Endothelial cell of umbilical vein (primary cell): ENCODE measurements at regions of chr19 and their contacts with region 1.

Region 1: DNA sequence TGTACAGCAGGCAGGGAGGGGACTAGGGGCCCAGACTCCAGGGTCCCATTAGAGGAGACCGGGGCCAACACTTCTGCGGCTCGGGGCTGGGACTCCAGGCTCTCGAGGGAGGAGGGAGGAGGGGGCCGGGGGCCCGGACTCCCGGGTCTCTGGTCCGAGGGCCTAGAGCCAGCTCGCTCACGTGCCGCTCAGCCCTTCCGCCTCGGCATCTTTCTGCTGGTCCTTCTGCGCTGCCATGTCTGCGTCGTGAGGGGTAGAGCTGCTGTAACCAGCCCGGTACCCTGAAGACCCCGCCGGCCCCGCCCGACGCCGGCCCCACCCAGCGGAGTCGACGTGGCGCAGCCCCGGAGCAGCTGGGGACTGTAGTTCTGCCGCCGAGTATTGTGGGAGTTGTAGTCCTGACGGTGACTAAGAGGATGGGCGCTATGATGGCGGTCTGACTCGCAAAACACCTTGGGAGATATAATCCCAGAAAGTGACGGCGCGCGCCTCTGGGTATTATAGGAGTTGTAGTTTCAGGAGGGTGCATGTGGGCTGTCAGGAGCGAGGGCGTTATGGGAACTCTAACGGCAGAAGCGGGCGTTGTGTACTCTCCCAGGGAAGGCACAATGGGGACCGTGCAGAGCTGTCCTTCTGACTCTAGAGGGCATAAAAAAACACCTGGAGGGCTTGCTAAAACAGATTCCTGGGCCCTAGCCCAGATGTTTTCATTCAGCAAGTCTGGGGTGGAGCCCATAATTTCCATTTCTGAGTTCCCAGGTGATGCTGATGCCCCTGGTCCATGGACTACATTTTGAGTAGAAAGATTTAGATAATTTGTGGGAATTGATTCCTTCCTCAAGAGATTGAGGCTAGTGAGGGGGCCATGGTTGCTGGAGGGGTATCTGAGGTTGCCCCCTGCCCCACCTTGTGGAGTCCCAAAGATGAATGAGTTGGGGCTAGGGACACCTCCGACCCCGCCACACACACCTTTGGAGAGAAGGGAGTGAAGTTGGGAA is at the start of gene RABAC1:
- DNase-seq: peak; percentile 91
- H3K4me3 ChIP-seq: peak within 1 kb of the TSS; percentile 52 to 90 (median 68)
- H3K27ac ChIP-seq: peak within 1 kb of the TSS; percentile 87
- H3K4me1 ChIP-seq: peaks cover 12% of the 10 kb centered on the region
- H3K27me3 ChIP-seq: no peaks in the 10 kb centered on the region
- CTCF ChIP-seq: peak in 1 of 2 donors; percentile 33
- POLR2A ChIP-seq: no peak
- total RNA-seq, gene RABAC1: 178 and 181 TPM in 2 replicates

Region 2: DNA sequence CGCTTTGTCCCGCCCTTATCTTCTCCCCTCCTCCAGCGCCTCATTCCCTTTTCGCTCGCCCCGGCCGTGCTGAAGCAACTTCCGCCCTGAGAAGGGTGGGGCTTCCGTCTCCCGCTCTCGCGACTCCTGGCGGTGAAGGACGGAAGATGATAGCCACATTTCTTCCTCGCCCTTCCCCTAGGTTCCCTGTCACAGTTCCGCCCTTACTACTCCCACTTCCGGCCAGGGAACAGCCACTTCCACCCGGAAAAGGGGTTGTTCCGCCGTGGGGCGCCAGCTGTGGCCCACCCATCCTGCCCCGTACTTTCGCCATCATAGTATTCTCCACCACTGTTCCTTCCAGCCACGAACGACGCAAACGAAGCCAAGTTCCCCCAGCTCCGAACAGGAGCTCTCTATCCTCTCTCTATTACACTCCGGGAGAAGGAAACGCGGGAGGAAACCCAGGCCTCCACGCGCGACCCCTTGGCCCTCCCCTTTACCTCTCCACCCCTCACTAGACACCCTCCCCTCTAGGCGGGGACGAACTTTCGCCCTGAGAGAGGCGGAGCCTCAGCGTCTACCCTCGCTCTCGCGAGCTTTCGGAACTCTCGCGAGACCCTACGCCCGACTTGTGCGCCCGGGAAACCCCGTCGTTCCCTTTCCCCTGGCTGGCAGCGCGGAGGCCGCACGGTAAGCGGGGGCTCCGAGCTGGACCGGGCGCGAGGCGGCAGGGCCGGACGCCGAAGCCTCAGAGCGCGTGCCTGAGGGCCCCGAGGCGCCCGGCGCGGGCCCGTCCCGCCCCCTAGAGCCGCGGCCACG is 99.5 kb before region 1 on chr19 and contains the start of gene RPS19:
- CTCF ChIA-PET with region 1: interaction called, 7 read pairs
- POLR2A ChIA-PET with region 1: interaction called, 4 read pairs
- dilution Hi-C with region 1: no loop called
- intact Hi-C with region 1: loop called (anchors 1 kb)
- DNase-seq: peak; percentile 99
- H3K4me3 ChIP-seq: peak within 1 kb of the TSS; percentile 78 to 86 (median 85)
- H3K27ac ChIP-seq: peak within 1 kb of the TSS; percentile 93
- H3K4me1 ChIP-seq: peaks cover 39% of the 10 kb centered on the region
- H3K27me3 ChIP-seq: no peaks in the 10 kb centered on the region
- CTCF ChIP-seq: peak; percentile 43 to 65
- POLR2A ChIP-seq: peak; percentile 86
- total RNA-seq, gene RPS19: 2,195 and 2,234 TPM in 2 replicates

Region 3: GRCh38 chr19:41872775-41873647 is 86.3 kb before region 1 on chr19:
- CTCF ChIA-PET with region 1: interaction called, 15 read pairs
- POLR2A ChIA-PET with region 1: interaction called, 4 read pairs
- dilution Hi-C with region 1: no loop called
- intact Hi-C with region 1: loop called (anchors 2 kb)
- DNase-seq: peak; percentile 65
- H3K4me3 ChIP-seq: no peak overlapping the region
- H3K27ac ChIP-seq: no peak overlapping the region
- H3K4me1 ChIP-seq: no peaks in the 10 kb centered on the region
- H3K27me3 ChIP-seq: no peaks in the 10 kb centered on the region
- CTCF ChIP-seq: peak; percentile 65 to 85
- POLR2A ChIP-seq: peak; percentile 34

Region 4: GRCh38 chr19:41883821-41884733 is 75.3 kb before region 1 on chr19:
- CTCF ChIA-PET with region 1: interaction called, 4 read pairs
- POLR2A ChIA-PET with region 1: interaction called, 7 read pairs
- dilution Hi-C with region 1: no loop called
- intact Hi-C with region 1: loop called (anchors 1 kb)
- DNase-seq: peak; percentile 94
- H3K4me3 ChIP-seq: peak overlapping the region; percentile 59 to 88 (median 88)
- H3K27ac ChIP-seq: peak overlapping the region; percentile 33
- H3K4me1 ChIP-seq: peaks cover 19% of the 10 kb centered on the region
- H3K27me3 ChIP-seq: no peaks in the 10 kb centered on the region
- CTCF ChIP-seq: peak in 1 of 2 donors; percentile 18
- POLR2A ChIP-seq: peak; percentile 86

Region 5: GRCh38 chr19:41936416-41936850 is 22.9 kb before region 1 on chr19:
- CTCF ChIA-PET with region 1: no interaction called
- POLR2A ChIA-PET with region 1: no interaction called
- dilution Hi-C with region 1: no loop called
- intact Hi-C with region 1: no loop called
- DNase-seq: no peak
- H3K4me3 ChIP-seq: no peak overlapping the region
- H3K27ac ChIP-seq: no peak overlapping the region
- H3K4me1 ChIP-seq: peaks cover 2% of the 10 kb centered on the region
- H3K27me3 ChIP-seq: peaks cover 50 to 52% of the 10 kb centered on the region in 2 experiments
- CTCF ChIP-seq: no peak
- POLR2A ChIP-seq: no peak

Region 6: GRCh38 chr19:42042455-42043170 is 83.3 kb after region 1 on chr19:
- CTCF ChIA-PET with region 1: no interaction called
- POLR2A ChIA-PET with region 1: no interaction called
- dilution Hi-C with region 1: no loop called
- intact Hi-C with region 1: no loop called
- DNase-seq: no peak
- H3K4me3 ChIP-seq: no peak overlapping the region
- H3K27ac ChIP-seq: no peak overlapping the region
- H3K4me1 ChIP-seq: no peaks in the 10 kb centered on the region
- H3K27me3 ChIP-seq: no peaks in the 10 kb centered on the region
- CTCF ChIP-seq: no peak
- POLR2A ChIP-seq: no peak

Region 7: DNA sequence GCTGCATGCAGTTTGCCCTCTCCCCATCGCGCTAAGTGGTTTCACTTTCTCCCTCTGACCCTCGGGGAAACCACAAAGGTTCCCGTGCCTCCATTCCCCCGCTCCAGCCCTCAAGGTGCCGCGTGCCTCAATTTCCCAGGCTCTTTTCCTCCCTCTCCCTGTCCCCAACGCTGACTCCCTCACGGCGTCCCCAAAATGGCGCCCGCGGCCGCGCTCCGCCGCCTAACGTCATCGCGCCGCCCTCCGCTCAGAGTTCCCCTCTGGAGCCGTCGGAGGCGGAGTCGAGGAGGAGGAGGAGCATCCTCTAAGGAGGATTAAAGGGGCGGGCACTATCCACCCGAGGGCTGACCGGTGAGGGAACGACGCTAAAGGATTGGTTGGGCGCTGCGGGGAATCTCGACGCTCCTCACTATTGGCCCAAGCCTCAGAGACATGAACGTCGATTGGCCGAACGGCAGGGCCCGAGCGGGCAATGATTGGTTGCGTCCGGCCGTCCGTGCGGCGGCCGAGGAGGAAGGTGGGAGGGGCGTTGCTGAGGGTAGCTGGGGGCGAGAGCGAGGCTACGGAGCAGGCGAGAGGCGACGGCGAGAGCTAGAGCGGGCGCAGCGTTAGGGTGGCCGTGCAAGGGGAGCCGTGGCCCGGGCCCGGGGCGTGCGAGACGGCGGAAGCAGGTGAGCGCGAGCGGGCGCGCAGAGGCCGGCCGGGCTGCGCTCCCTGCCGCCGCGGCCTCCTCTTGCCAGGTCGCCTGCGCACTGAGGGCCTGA is 116.4 kb after region 1 on chr19 and contains the start of gene ZNF574:
- CTCF ChIA-PET with region 1: no interaction called
- POLR2A ChIA-PET with region 1: interaction called, 4 read pairs
- dilution Hi-C with region 1: no loop called
- intact Hi-C with region 1: loop called (anchors 1 kb)
- DNase-seq: peak; percentile 100
- H3K4me3 ChIP-seq: peak within 1 kb of the TSS; percentile 89 to 92 (median 90)
- H3K27ac ChIP-seq: peak within 1 kb of the TSS; percentile 85
- H3K4me1 ChIP-seq: peaks cover 16% of the 10 kb centered on the region
- H3K27me3 ChIP-seq: peaks cover 2% of the 10 kb centered on the region in 2 experiments
- CTCF ChIP-seq: no peak
- POLR2A ChIP-seq: no peak
- total RNA-seq, gene ZNF574: 14.0 and 15.3 TPM in 2 replicates

Region 8: GRCh38 chr19:42092350-42092749 is 133.0 kb after region 1 on chr19:
- CTCF ChIA-PET with region 1: no interaction called
- POLR2A ChIA-PET with region 1: no interaction called
- dilution Hi-C with region 1: no loop called
- intact Hi-C with region 1: loop called (anchors 2 kb)
- DNase-seq: peak; percentile 92
- H3K4me3 ChIP-seq: no peak overlapping the region
- H3K27ac ChIP-seq: peak overlapping the region; percentile 13
- H3K4me1 ChIP-seq: peaks cover 29% of the 10 kb centered on the region
- H3K27me3 ChIP-seq: no peaks in the 10 kb centered on the region
- CTCF ChIP-seq: peak; percentile 75 to 89
- POLR2A ChIP-seq: peak; percentile 32